Activated CD8-positive, alpha-beta memory T cell treated with anti-CD3 and anti-CD28 coated beads, Interleukin-2, amount 10 ng/mL, durations not matched to agents 7 days and 5 days (primary cell): ENCODE measurements at regions of chr13 and their contacts with region 1.

Region 1: GRCh38 chr13:75870397-75870903 is 234.3 kb downstream of the LMO7 start:
- DNase-seq: no peak
- ATAC-seq: peak; percentile 25
- H3K4me3 Mint-ChIP-seq: peak overlapping the region; percentile 62
- H3K27ac Mint-ChIP-seq: peak overlapping the region; percentile 74
- H3K4me1 Mint-ChIP-seq: peaks cover 21% of the 10 kb centered on the region
- H3K27me3 Mint-ChIP-seq: peaks cover 20% of the 10 kb centered on the region

Region 2: GRCh38 chr13:75760131-75761021 is 110.1 kb before region 1 on chr13:
- CTCF ChIA-PET with region 1: interaction called, 11 read pairs
- DNase-seq: no peak
- ATAC-seq: peak; percentile 41
- H3K4me3 Mint-ChIP-seq: peak overlapping the region; percentile 29
- H3K27ac Mint-ChIP-seq: peak overlapping the region; percentile 44
- H3K4me1 Mint-ChIP-seq: peaks cover 41% of the 10 kb centered on the region
- H3K27me3 Mint-ChIP-seq: no peaks in the 10 kb centered on the region

Region 3: DNA sequence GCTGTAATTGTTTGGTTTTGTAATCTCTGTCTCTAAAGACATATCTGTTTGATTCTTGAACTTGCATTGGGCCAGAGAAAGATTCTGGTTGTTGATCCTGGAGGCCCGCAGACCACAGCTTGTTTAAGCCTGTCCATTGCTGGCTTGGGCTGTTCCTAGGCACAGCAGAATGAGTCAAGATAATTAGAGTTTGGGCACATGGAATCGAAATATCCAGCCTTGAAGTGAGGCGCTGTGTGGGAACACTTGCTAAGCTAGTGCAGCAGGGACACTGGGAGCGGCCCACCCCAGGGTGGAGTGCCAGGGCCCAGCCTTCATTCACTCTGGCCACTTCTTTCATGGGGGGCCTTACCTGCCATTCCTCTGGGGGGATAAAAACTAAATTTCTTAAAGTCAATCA is 14.6 kb before region 1 on chr13:
- CTCF ChIA-PET with region 1: interaction called, 19 read pairs
- DNase-seq: no peak
- ATAC-seq: no peak
- H3K4me3 Mint-ChIP-seq: no peak overlapping the region
- H3K27ac Mint-ChIP-seq: no peak overlapping the region
- H3K4me1 Mint-ChIP-seq: no peaks in the 10 kb centered on the region
- H3K27me3 Mint-ChIP-seq: no peaks in the 10 kb centered on the region